GM10248 (cell line): ENCODE measurements at regions of chr2 and their contacts with region 1.

Region 1: GRCh38 chr2:714005-714741 is 37.0 kb upstream of the TMEM18 start:
- DNase-seq: peak; percentile 76
- CTCF ChIP-seq: peak; percentile 81

Region 2: DNA sequence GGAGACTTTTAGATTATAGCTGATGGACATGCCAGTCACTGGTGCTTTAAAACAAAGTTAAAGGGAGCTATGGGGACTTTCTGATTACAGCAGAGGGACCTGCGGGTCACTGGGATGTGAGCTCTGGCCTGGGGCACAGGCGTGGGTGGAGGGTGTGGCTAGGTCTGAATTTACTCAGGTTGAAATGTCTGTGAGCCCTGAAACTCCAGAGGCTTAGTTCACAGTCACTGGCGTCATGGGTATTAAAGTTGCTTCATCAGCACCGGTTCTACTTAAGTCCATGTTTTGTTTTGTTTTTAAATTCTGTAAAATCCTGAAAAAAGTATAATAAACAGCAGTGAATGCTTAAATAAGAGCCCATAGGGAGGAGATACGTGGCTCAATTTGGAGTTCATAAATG is 12.0 kb after region 1 on chr2:
- CTCF ChIA-PET with region 1: interaction called, 22 read pairs
- POLR2A ChIA-PET with region 1: no interaction called
- DNase-seq: peak; percentile 62
- CTCF ChIP-seq: no peak

Region 3: DNA sequence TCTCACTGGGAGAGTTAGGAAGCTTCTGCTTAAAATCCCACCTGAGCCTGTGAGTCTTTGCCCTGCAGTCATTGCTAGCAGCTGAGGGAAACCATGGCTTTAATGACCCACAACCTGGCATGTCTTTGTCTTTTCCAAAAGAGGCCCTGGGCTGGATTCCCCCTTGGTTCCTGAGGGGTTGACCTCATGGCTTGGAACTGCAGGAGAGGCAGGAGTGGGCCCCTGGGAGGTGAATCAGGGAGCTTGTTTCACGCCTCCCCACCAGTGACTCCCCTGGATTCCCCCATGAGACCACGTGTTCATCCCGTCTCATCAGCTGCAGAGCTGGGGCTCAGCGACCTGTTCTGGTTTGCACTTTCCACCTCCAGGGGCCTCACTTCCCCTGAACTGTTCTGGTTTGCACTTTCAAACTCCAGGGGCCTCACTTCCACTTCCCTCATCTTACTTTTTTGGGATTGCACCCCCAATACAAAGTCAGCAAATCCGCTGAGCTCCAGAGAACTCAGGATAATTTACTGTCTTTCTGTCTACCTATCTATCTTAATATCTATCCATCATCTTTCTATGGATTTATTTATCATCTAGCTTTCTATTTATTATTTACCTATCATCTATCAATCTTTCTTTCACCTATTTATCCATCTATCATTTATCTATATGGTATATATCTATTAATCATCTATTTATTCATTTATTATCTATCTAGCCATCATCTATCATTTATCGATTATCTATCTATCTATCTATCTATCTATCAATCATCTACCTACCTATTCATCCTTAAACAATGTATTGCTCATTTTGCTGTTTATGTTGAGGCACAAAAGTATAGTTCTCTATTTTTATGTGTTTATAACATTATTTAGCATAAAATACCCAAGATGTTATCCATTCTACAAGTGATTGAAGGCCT is 21.8 kb after region 1 on chr2:
- CTCF ChIA-PET with region 1: interaction called, 23 read pairs
- POLR2A ChIA-PET with region 1: no interaction called
- DNase-seq: peak; percentile 44
- CTCF ChIP-seq: peak; percentile 19

Region 4: DNA sequence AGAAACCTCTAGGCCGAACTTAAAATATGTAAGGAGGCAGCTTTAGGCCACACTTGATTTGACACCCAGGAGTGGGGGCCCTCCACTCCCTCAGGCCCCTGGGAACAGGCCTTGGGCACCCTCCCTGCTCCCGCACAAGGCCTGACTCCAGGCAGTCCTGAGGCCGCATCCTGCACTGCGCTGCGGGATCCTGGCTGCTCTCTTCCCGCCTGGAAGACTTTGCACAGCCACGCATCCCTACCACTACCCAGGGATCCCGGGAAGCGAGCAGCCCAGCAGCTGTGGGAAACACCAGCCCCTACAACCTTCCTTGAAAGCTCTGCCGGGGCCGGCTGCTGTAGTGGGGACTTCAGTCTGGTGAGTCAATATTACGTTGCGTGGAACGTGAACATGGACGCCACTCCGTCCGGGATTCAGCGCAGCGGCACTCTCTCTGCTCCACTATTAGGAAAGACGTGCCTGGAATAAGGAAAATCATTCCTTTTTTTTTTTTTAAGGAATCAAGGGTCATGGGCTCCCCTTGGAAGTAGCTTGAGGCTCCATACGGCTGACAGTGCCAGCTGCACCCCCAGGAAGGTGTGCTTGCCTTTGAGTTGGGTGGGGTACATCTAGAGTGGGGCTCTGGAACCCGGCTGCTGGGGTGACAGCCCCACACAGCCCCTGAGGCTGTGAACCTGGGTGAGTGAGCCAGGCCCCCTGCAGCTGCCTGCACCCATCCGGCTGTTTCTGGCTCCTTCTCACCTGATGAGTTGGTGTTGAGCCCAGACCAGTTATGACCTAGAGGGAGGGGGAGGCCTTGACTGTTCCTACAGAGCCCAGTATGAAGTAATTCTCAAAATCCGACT is 82.2 kb after region 1 on chr2:
- CTCF ChIA-PET with region 1: no interaction called
- POLR2A ChIA-PET with region 1: no interaction called
- DNase-seq: no peak
- CTCF ChIP-seq: no peak

Region 5: DNA sequence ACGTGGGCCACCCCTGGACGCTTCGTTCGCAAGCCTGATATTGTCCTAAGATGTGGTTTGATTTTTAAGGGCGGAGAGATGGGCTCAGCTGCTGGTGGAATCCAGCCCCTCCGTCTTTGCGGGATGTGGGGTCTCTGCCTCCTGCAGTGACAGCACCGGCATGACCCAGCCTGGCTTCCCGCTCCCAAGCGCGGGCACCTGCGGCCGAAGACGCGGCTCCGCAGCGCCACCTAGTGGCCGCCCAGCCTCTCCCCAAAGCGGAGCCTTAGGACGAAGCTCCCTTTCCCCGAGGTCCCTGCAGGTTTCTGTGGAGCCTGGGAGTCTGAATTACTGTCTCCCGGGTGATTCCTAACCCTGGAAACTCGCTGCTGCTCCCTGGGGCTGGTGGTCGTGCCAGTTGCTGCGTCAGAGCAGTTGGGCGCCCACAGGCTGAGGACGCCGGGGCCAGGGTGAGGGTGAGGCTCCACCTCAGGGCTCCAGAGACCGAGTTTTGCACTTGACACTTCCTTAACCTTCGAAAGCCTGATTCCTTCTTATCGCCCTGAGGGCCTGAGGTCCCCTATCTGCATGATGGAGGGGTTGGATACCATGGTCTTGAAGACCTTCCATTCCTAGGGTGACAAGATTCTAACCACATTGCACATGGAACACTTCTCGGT is 836.6 kb after region 1 on chr2:
- CTCF ChIA-PET with region 1: interaction called, 48 read pairs
- POLR2A ChIA-PET with region 1: no interaction called
- DNase-seq: peak; percentile 82
- CTCF ChIP-seq: peak; percentile 94